Activated CD4-positive, alpha-beta T cell treated with anti-CD3 and anti-CD28 coated beads, Interleukin-2, amount 10 ng/mL, durations not matched to agents 24 days and 14 days (primary cell): ENCODE measurements at regions of chr3 and their contacts with region 1.

Region 1: GRCh38 chr3:171772427-171773056 is 37.7 kb downstream of the PLD1 start:
- DNase-seq: peak; percentile 79
- H3K4me3 Mint-ChIP-seq: no peak overlapping the region
- H3K27ac Mint-ChIP-seq: no peak overlapping the region
- H3K4me1 Mint-ChIP-seq: no peaks in the 10 kb centered on the region
- H3K27me3 Mint-ChIP-seq: peaks cover 23% of the 10 kb centered on the region

Region 2: DNA sequence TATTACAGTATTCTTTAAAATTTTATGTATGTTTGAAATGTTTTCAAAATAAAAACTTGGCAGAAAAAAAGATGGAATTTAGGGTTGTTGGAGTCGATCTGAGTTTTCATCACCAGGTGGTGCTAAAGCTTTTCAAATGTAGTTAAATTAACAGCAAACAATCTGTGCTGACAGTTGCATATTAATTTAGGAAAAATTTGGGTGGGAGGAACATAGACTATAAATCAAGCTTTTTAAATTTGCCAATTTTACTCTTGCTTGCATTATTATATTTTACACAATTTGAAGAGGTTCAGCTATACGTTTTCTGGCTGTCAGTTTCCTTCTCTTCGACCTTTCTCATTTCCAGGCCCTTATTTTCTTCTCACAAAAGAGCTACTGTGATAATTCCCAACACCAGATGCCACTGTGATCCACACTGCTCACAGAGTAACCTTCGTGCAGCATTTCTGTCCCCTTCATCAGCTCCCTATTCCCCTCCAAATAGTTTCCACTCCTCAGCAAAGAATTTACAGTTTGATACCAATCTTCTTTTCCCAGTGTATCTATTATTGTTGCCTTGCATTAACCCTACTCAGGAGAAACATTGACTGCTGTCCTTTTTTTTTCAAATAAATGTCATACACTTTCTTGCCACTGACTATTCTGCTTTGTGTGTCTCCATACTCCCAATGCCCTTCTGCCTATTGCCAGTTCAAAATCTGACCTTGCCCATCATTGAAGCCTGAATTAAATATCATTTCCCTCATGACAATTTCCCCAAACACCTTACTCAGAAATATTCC is 810.7 kb before region 1 on chr3:
- intact Hi-C with region 1: loop called (anchors 1 kb)
- DNase-seq: no peak
- H3K4me3 Mint-ChIP-seq: no peak overlapping the region
- H3K27ac Mint-ChIP-seq: no peak overlapping the region
- H3K4me1 Mint-ChIP-seq: no peaks in the 10 kb centered on the region
- H3K27me3 Mint-ChIP-seq: peaks cover 30% of the 10 kb centered on the region

Region 3: DNA sequence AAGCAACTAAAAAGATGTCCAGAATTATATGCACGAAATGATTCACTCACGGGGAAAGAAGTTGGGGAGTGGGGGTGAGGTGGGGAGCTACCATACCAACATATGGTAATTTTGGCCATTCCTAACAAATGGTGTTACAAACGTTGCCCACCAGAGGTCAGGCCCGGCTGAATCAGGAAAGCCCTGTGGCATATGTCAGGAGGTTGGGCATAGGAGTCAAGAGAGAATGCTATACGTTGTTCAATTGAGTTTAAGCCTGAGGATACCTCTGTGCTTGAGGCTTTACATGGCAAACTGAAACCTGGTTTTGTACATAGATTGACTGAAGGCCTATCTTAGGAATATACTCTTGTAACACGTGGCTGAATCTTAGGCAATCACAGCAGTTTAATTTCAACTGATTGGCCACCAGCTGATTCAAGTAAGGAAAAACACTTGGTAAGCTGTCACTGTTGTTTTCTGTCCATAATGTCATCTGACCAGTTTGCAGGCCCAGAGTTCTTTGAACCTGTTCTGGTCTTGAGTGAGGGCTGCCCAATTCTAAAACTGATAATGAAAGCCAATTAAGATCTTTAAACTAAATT is 722.6 kb before region 1 on chr3:
- intact Hi-C with region 1: loop called (anchors 2 kb)
- DNase-seq: peak; percentile 82
- H3K4me3 Mint-ChIP-seq: no peak overlapping the region
- H3K27ac Mint-ChIP-seq: no peak overlapping the region
- H3K4me1 Mint-ChIP-seq: peaks cover 4% of the 10 kb centered on the region
- H3K27me3 Mint-ChIP-seq: peaks cover 21% of the 10 kb centered on the region

Region 4: DNA sequence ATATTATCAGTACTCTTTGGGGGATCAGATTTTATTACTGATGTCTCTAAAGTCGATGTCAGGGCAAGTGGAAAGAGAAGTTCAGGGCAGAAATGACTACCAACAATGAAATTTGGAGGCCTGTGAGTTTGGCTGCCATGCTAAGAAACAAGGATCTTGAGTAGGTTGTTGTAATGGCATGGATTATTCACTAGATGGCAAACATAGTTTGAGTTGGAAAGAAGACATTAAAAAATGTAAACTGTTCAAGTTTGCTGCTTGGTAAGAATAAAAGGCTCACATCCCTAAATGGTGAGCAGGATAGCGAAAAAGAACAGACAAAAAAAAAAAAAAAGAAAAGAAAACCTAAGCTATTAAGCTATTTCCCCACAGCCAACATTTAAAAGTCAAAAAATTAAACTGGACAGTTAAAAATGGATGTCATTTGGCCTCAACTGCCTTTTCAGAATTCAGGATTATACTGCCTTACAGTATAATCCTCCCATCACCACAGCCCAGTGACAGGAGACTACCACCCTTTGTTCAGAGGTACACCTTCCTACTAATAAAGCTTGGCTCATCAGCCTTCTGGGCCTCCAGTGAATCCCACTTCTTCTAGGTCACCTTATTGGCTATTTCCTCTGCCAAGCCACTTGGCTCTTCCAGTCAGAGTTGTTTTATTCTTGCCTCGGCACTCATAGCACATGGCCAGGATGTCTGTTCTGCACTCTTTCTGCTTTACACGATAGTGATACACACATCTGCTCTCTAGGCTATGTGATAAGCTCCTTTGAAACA is 126.0 kb before region 1 on chr3:
- intact Hi-C with region 1: loop called (anchors 5 kb)
- DNase-seq: no peak
- H3K4me3 Mint-ChIP-seq: no peak overlapping the region
- H3K27ac Mint-ChIP-seq: no peak overlapping the region
- H3K4me1 Mint-ChIP-seq: no peaks in the 10 kb centered on the region
- H3K27me3 Mint-ChIP-seq: peaks cover 2% of the 10 kb centered on the region

Region 5: GRCh38 chr3:171809821-171810628 is 37.5 kb after region 1 on chr3 and contains the start of gene PLD1:
- intact Hi-C with region 1: no loop called
- DNase-seq: peak; percentile 84
- H3K4me3 Mint-ChIP-seq: peak within 1 kb of the TSS; percentile 86
- H3K27ac Mint-ChIP-seq: no peak within 1 kb of the TSS
- H3K4me1 Mint-ChIP-seq: peaks cover 18% of the 10 kb centered on the region
- H3K27me3 Mint-ChIP-seq: peaks cover 47% of the 10 kb centered on the region
- total RNA-seq, gene PLD1: 0.09 TPM in 1 of 2 replicates, not detected in the other